Activated naive CD4-positive, alpha-beta T cell treated with anti-CD3 and anti-CD28 coated beads for 36 hours (primary cell): ENCODE measurements at regions of chr5 and their contacts with region 1.

Region 1: DNA sequence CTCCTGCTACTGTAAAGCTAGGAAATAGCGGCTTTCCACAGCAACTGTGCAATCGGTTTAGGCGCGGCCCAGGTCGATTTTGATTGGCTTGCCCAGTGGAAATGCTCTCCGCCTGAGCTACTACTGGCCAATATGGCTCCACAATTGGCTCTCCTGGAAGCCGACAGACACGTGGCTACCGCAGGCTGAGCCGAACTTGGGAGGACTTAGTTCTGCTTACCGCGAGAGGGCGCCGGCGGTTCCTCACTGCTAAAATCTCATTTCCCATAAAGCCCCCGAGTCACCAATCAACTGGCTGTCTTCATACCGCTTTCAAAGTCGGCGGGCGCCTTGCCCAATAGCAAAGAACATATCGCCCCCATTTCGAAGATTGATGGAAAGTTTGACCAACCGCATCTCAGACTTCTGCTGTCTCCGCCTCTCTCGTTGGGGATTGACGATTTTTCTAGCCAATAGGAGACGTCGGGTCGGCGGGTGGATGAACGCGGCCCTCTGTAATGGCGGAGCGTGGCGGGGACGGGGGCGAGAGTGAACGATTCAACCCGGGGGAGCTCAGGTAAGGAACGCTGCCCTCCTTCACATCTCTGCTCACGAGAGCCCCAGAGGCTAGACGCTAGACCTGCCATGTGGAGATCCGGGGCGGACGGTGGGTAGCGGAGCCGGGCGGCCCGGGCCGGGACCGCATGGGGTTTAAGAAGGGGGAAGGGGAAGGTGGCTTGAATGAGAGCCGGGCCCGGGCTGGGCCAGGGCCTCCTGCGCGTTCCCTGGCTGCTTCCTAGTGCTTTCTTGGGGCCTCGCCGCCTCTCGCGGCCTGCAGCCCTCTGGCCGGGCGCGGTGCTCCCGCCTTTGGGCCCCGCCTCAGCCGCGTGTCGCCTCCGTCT is at the start of gene TCERG1:
- DNase-seq: peak; percentile 99
- H3K4me3 Mint-ChIP-seq: peak within 1 kb of the TSS; percentile 100
- H3K27ac Mint-ChIP-seq: peak within 1 kb of the TSS; percentile 99
- H3K4me1 Mint-ChIP-seq: peaks cover 37% of the 10 kb centered on the region
- H3K27me3 Mint-ChIP-seq: no peaks in the 10 kb centered on the region
- total RNA-seq, gene TCERG1: 123 to 131 TPM

Region 2: DNA sequence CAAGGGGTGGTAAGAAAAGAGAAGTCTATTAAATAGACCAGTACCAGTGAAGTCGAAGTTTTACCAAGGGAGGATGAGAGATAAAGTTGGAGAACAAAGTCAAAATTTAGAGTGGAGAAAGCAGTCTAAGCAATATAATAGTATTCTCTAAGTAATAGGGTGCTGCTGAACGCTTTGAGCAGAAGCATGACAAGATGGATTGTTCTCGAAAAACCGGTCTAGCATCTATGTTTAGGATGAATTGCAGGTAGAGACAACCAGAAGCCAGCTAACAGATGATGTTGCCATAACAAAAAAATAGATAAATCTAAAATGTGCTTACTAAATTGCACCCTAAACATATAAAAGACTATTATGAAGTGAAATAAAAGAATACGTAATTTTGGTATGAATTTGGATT is 848.9 kb before region 1 on chr5:
- CTCF ChIA-PET with region 1: no interaction called
- intact Hi-C with region 1: no loop called
- DNase-seq: no peak
- H3K4me3 Mint-ChIP-seq: no peak overlapping the region
- H3K27ac Mint-ChIP-seq: no peak overlapping the region
- H3K4me1 Mint-ChIP-seq: no peaks in the 10 kb centered on the region
- H3K27me3 Mint-ChIP-seq: no peaks in the 10 kb centered on the region

Region 3: GRCh38 chr5:145946112-145946861 is 500.8 kb before region 1 on chr5:
- CTCF ChIA-PET with region 1: no interaction called
- intact Hi-C with region 1: loop called (anchors 2 kb)
- DNase-seq: peak; percentile 37
- H3K4me3 Mint-ChIP-seq: no peak overlapping the region
- H3K27ac Mint-ChIP-seq: no peak overlapping the region
- H3K4me1 Mint-ChIP-seq: peaks cover 13% of the 10 kb centered on the region
- H3K27me3 Mint-ChIP-seq: peaks cover 33% of the 10 kb centered on the region

Region 4: GRCh38 chr5:146203011-146203871 is 243.9 kb before region 1 on chr5 and contains the start of gene RBM27:
- CTCF ChIA-PET with region 1: no interaction called
- intact Hi-C with region 1: loop called (anchors 1 kb)
- DNase-seq: peak; percentile 97
- H3K4me3 Mint-ChIP-seq: no peak within 1 kb of the TSS
- H3K27ac Mint-ChIP-seq: no peak within 1 kb of the TSS
- H3K4me1 Mint-ChIP-seq: peaks cover 15% of the 10 kb centered on the region
- H3K27me3 Mint-ChIP-seq: no peaks in the 10 kb centered on the region
- total RNA-seq, gene RBM27: 14.8 to 18.3 TPM

Region 5: DNA sequence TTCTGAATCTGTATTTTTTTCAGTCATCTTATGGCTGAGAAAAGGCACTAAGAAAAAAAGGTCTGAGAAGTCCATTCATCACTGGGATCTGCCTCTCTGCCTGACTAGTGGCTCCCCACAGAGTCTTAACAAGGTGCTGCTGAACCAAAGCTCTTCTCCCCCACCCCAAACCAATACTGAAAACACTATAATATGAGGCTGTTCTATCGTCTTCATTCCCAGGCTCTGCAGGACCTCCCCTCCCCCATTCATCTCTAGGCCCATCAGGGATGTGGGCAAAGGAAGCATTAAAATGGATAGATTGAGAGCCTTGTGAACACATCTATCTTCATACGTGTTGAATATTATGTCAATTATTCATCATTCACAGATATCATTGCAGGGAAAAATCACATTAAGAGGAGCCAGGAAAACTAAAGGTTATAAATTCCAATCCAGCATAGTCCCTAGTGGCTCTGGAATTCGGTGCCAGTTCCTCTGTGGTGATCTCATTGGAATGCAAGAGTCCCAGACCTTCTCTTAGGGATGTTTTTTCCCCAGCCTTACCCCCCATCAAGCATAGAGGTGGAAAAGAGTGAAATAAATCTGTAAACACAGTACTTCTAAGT is 113.2 kb after region 1 on chr5:
- CTCF ChIA-PET with region 1: no interaction called
- intact Hi-C with region 1: no loop called
- DNase-seq: no peak
- H3K4me3 Mint-ChIP-seq: no peak overlapping the region
- H3K27ac Mint-ChIP-seq: no peak overlapping the region
- H3K4me1 Mint-ChIP-seq: no peaks in the 10 kb centered on the region
- H3K27me3 Mint-ChIP-seq: peaks cover 6% of the 10 kb centered on the region

Region 6: GRCh38 chr5:146751781-146752401 is 304.8 kb after region 1 on chr5:
- CTCF ChIA-PET with region 1: no interaction called
- intact Hi-C with region 1: loop called (anchors 5 kb)
- DNase-seq: peak; percentile 61
- H3K4me3 Mint-ChIP-seq: no peak overlapping the region
- H3K27ac Mint-ChIP-seq: peak overlapping the region; percentile 63
- H3K4me1 Mint-ChIP-seq: peaks cover 40% of the 10 kb centered on the region
- H3K27me3 Mint-ChIP-seq: no peaks in the 10 kb centered on the region

Region 7: GRCh38 chr5:146878476-146879172 is 431.5 kb after region 1 on chr5 and contains the start of gene PPP2R2B:
- CTCF ChIA-PET with region 1: no interaction called
- intact Hi-C with region 1: loop called (anchors 1 kb)
- DNase-seq: peak; percentile 40
- H3K4me3 Mint-ChIP-seq: peak within 1 kb of the TSS; percentile 80
- H3K27ac Mint-ChIP-seq: no peak within 1 kb of the TSS
- H3K4me1 Mint-ChIP-seq: peaks cover 11% of the 10 kb centered on the region
- H3K27me3 Mint-ChIP-seq: peaks cover 36% of the 10 kb centered on the region
- total RNA-seq, gene PPP2R2B: not detected